Right ventricle myocardium inferior (tissue), 1 donor: ENCODE measurements at regions of chr9 and their contacts with region 1.

Region 1: DNA sequence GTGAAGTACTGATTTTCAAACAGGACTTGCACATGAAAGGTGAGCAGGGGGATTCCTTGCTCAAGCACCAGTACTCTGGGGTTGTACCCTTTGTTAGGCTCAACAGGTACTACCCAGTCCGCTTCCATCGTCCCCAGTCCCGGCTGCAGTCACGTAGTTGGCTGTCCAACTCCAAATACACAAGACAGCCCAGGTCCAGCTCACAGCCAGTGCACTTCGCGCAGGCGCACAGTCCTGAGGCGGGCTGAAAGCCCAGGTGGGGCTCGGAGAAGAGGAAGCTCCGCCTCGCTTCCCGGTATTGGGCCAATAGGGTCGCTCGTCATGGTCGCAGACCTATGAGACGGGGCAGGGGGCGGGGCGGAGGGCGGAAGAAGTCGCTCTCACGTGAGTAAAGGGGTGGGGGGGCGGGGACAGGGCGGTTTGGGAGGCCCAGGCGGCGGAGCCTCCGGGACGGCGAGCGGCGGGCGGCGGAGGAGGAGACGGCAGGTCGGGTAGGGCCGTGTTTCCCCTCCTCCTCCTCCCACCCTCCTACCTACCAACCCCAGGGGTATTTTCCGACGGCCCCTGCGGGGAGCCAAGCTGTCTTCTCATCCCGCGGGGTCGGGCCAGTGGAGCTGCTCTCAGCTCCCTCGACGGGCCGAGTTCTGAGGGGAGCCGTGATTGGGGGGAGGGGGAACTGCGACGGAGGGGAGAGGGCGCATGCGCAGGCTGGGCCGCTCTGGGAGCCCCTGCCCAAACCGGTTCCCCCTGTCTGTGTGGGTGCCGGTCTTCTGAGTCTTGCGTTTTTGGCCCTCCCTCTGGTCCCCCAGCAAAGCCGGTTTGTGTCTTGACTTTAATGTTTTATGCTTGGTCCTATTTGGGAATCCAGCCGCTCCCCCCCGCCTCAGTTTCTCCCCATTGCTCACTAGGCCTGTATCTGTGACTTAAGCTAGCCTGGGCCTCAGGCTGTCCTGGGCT is at the start of gene RABGAP1:
- DNase-seq: peak; percentile 100
- ATAC-seq: peak; percentile 99
- total RNA-seq, gene RABGAP1: 45.1 TPM

Region 2: DNA sequence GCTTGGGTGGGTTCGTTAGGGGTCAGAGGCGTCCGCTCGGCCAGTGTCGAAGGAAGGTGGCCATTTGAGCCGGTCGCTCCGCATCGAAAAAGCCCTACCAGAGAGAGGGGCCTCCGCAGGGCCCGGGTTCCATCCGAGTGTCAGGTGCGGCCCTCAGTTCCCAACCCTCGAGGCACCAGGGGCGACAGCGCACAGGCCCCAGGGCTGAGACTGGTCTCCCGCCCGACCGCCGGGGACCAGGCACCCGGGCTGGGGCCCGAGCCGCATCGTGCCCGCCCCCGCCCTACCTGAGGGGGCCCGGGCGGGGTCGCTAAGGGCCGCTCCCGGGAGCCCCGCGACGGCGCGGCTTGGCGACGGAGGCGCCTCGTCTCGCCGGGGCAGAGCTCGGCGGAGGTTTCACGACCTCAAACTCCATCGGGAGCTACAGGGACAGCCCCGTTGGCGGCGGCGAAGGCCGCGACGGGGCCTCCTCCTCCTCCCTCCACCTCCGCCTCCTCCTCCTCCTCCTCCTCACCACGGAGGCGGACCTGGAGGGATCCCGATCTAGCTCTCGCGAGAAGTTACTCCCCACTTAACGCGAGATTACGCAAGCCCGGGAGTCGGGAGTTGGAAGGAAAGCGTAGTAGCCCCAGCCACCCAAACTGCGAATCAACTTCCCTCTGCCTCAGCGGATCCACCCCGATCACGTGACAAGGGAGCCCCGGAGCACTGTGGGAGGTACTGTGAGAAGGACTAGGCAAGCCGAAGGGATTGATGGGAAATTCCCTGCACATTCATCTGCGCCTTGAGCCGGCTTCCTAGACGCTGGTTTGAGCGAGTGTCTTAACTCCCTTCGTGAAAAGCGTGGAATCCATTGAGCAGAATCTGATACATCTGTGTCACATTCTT is 35.8 kb before region 1 on chr9 and contains the start of gene RC3H2:
- intact Hi-C with region 1: loop called (anchors 5 kb)
- DNase-seq: peak; percentile 99
- ATAC-seq: peak; percentile 99
- total RNA-seq, gene RC3H2: 35.1 TPM

Region 3: GRCh38 chr9:124436320-124436719 is 1495.4 kb after region 1 on chr9:
- intact Hi-C with region 1: no loop called
- DNase-seq: no peak
- ATAC-seq: no peak